ENCODE measurements at regions of chr10 and their contacts with region 1.

Region 1: DNA sequence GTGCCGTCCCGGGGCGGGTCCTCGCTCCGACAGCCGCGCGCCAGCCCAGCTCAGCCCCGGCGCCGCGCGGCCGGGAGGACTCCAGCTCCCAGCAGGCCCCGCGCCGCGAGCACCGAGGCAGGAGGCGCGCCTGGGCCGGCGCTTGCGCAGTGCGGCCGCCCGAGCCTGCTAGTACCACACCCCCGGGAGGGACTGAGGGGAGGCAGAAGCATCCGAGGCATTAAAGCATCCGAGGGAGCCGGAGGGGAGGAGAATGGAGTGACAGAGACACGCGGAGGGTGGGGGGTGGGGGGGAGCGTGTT is at the start of gene GRK5:
- DNase-seq: peak; percentile 93
- H3K4me3 Mint-ChIP-seq: peak within 1 kb of the TSS; percentile 85
- H3K27ac Mint-ChIP-seq: peak within 1 kb of the TSS; percentile 90
- H3K4me1 Mint-ChIP-seq: peaks cover 33% of the 10 kb centered on the region
- H3K27me3 Mint-ChIP-seq: no peaks in the 10 kb centered on the region
- total RNA-seq, gene GRK5: 27.1 to 29.7 TPM

Region 2: GRCh38 chr10:119159332-119159731 is 48.0 kb before region 1 on chr10:
- CTCF ChIA-PET with region 1: no interaction called
- intact Hi-C with region 1: no loop called
- DNase-seq: no peak
- H3K4me3 Mint-ChIP-seq: no peak overlapping the region
- H3K27ac Mint-ChIP-seq: no peak overlapping the region
- H3K4me1 Mint-ChIP-seq: peaks cover 23% of the 10 kb centered on the region
- H3K27me3 Mint-ChIP-seq: no peaks in the 10 kb centered on the region

Region 3: GRCh38 chr10:119233821-119234220 is 26.5 kb after region 1 on chr10:
- CTCF ChIA-PET with region 1: interaction called, 5 read pairs
- intact Hi-C with region 1: loop called (anchors 1 kb)
- DNase-seq: no peak
- H3K4me3 Mint-ChIP-seq: no peak overlapping the region
- H3K27ac Mint-ChIP-seq: peak overlapping the region; percentile 68
- H3K4me1 Mint-ChIP-seq: peaks cover 72% of the 10 kb centered on the region
- H3K27me3 Mint-ChIP-seq: no peaks in the 10 kb centered on the region

Region 4: GRCh38 chr10:119305860-119306513 is 98.7 kb after region 1 on chr10:
- CTCF ChIA-PET with region 1: interaction called, 22 read pairs
- intact Hi-C with region 1: loop called (anchors 1 kb)
- DNase-seq: peak; percentile 97
- H3K4me3 Mint-ChIP-seq: peak overlapping the region; percentile 68
- H3K27ac Mint-ChIP-seq: peak overlapping the region; percentile 99
- H3K4me1 Mint-ChIP-seq: peaks cover 74% of the 10 kb centered on the region
- H3K27me3 Mint-ChIP-seq: no peaks in the 10 kb centered on the region

Region 5: DNA sequence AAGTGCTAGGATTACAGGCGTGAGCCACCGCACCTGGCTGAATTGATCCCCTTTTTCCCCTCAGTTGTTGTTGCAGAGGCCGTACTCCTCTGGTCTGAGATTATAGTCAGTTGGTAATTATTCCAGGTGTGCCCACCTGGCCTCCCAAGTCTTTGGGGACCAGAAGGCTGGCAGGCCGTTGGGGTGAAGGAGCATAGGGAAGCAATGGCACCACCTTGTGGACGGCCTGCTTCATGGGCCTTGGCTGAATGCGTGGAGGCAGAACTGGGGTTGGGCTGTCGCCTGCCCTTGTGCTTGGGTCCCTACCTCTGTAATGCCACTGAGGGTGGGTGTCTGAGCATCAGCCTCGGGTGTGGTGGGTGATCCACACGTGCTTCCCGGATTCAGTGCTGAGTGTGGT is 209.5 kb after region 1 on chr10:
- CTCF ChIA-PET with region 1: interaction called, 32 read pairs
- intact Hi-C with region 1: loop called (anchors 1 kb)
- DNase-seq: peak; percentile 85
- H3K4me3 Mint-ChIP-seq: no peak overlapping the region
- H3K27ac Mint-ChIP-seq: no peak overlapping the region
- H3K4me1 Mint-ChIP-seq: peaks cover 1% of the 10 kb centered on the region
- H3K27me3 Mint-ChIP-seq: no peaks in the 10 kb centered on the region

Region 6: DNA sequence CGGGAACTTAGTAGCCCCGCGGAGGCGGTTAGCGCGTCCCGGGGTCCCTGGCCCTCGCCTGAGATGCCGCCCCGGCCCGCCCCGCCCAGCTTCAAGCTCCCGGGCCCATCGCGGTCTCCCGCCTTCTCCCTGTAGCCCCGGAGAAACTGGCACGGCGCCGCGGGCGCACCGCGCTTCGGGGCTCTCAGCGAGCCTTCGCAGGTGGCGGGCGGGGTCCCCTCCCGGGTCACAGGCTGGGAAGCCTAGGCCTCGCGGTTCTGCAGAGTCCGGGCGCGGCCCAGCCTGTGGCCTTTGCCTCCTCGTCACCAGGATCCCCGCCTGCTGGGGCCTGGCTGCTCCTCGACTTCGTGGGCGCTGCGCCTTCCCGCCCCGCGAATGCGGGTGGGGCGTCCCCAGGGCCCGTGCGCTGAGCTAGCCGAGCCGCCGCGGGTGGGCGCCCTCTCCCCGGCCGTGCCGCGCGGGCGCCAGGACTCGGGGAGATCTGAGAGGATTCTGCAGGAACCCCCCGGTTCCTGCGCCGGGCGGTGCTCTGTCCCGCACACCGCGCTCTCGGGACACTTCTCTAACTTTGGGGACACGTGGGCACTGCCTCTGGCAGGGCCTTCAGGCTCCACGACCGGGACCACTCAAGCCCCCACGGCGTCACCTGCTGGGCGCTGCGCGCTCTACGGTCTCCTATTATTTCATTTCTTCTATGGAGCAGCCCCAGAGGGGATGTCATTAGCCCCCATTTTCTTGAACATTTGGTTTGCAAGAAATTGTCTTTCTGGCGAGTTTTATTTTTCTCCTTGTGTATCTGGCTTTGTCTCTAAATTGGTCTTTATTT is 335.9 kb after region 1 on chr10:
- CTCF ChIA-PET with region 1: no interaction called
- intact Hi-C with region 1: loop called (anchors 1 kb)
- DNase-seq: peak; percentile 83
- H3K4me3 Mint-ChIP-seq: peak overlapping the region; percentile 84
- H3K27ac Mint-ChIP-seq: peak overlapping the region; percentile 88
- H3K4me1 Mint-ChIP-seq: peaks cover 25% of the 10 kb centered on the region
- H3K27me3 Mint-ChIP-seq: no peaks in the 10 kb centered on the region

Region 7: DNA sequence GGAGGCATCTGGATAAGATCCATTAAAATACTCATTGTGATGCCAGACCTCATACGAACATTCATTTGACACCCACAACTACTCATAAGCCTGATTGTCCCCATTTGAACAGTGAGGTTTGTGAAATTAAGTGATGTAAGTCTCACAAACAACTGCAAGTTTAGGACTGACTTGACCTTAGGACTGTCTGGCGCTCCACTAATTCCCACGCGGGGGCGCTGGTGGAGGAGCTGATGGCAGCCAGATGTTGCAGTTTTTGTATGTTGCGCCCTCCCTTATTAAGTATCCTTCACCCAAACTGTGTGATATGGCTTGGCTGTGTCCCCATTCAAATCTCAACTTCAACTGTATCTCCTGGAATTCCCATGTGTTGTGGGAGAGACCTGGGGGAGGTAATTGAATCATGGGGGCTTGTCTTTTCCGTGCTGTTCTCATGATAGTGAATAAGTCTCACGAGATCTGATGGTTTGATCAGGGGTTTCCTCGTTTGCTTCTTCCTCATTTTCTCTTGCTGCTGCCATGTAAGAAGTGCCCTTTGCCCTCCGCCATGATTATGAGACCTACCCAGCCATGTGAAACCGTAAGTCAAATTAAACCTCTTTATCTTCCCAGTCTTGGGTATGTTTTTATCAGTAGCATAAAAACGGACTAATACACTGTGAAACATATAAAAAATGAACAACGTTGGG is 409.7 kb after region 1 on chr10:
- CTCF ChIA-PET with region 1: no interaction called
- intact Hi-C with region 1: no loop called
- DNase-seq: peak; percentile 43
- H3K4me3 Mint-ChIP-seq: no peak overlapping the region
- H3K27ac Mint-ChIP-seq: no peak overlapping the region
- H3K4me1 Mint-ChIP-seq: peaks cover 3% of the 10 kb centered on the region
- H3K27me3 Mint-ChIP-seq: no peaks in the 10 kb centered on the region

Measured in activated naive CD4-positive, alpha-beta T cell treated with anti-CD3 and anti-CD28 coated beads for 36 hours (primary cell).